IMR-90 (cell line): ENCODE measurements at regions of chr12 and their contacts with region 1.

Region 1: DNA sequence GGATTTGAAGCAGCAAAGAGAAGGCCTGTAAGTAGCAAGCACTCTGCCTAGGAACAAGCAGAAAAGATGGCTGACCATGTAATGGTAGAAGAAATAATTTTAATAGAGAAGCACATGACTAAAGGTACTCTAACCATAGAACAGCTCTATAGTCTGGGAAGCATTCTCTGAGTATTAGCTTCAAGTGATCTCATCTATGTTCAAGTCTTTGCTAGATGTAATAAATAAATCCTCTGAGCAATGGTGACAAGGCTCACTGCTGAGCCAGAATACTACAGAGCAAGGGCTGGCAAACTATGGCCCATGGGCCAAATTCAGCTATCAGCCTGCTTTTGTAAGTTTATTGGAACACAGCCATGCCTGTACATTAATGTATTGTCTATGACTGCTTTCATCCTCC is 84.8 kb downstream of the PEBP1 start:
- DNase-seq: peak; percentile 64
- ATAC-seq: peak; percentile 61
- H3K4me3 ChIP-seq: no peak overlapping the region
- H3K27ac ChIP-seq: no peak overlapping the region
- H3K4me1 ChIP-seq: no peaks in the 10 kb centered on the region; the same call in 1 of the 2 replicates
- H3K27me3 ChIP-seq: no peaks in the 10 kb centered on the region
- CTCF ChIP-seq: no peak
- POLR2A ChIP-seq: no peak
- RAD21 ChIP-seq: no peak

Region 2: DNA sequence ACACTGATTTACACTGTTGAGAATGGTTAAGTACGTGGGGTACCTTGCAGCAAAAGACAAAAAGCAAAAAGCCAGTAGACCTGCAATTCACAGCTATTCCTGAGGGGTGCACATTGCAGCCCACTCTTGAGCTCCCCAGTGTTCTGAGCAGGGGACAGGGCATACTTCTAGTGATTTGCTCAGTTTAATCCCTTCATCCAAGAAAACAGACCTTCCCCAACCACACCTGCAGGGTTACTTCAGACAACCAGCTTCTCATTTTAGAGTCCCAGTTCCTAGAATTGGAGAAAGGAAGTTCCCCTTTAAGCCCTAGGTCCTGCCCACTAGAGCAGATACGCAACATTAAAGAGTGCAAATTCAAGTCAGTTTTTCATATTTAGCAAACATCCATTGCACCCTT is 156.1 kb before region 1 on chr12:
- CTCF ChIA-PET with region 1: no interaction called
- POLR2A ChIA-PET with region 1: no interaction called
- dilution Hi-C with region 1: no loop called
- in situ Hi-C with region 1: no loop called
- intact Hi-C with region 1: no loop called
- DNase-seq: no peak
- ATAC-seq: no peak
- H3K4me3 ChIP-seq: no peak overlapping the region
- H3K27ac ChIP-seq: no peak overlapping the region
- H3K4me1 ChIP-seq: peaks cover 7% of the 10 kb centered on the region
- H3K27me3 ChIP-seq: no peaks in the 10 kb centered on the region
- CTCF ChIP-seq: no peak
- POLR2A ChIP-seq: no peak
- RAD21 ChIP-seq: no peak

Region 3: GRCh38 chr12:118206107-118206412 is 14.6 kb before region 1 on chr12:
- CTCF ChIA-PET with region 1: no interaction called
- POLR2A ChIA-PET with region 1: interaction called, 16 read pairs
- dilution Hi-C with region 1: no loop called
- in situ Hi-C with region 1: no loop called
- intact Hi-C with region 1: no loop called
- DNase-seq: no peak
- ATAC-seq: no peak
- H3K4me3 ChIP-seq: no peak overlapping the region
- H3K27ac ChIP-seq: no peak overlapping the region
- H3K4me1 ChIP-seq: no peaks in the 10 kb centered on the region
- H3K27me3 ChIP-seq: no peaks in the 10 kb centered on the region
- CTCF ChIP-seq: no peak
- POLR2A ChIP-seq: no peak
- RAD21 ChIP-seq: no peak

Region 4: DNA sequence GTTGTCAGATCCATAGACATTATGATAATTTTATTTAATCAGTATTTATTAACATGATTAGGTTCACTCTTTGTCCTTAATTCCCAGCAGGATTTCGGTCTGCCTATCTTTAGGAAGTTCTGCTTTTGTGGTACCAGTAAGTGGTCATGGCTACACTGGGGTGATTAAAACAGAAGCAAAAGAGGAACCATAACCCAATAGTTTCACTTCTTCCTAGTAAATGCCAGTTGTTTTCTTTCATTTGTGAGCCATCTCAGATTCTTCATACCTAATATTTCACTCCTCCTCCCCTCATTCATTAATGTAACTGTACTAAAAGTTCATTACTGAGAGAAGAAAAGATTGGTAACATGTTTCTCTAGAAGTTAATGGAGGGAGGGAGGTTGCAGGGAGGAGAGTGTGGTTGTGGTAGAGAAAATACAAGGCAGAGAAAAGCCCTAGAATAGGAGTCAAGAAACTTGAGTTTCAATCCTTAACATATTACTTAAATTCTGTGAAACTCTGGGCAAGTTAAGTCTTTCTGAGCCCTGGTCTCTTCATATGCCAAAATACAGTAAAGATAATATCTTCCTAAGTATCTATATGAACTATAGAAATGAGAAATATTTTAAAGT is 16.5 kb after region 1 on chr12:
- CTCF ChIA-PET with region 1: interaction called, 6 read pairs
- POLR2A ChIA-PET with region 1: no interaction called
- dilution Hi-C with region 1: no loop called
- in situ Hi-C with region 1: no loop called
- intact Hi-C with region 1: loop called (anchors 2 kb)
- DNase-seq: no peak
- ATAC-seq: no peak
- H3K4me3 ChIP-seq: no peak overlapping the region
- H3K27ac ChIP-seq: no peak overlapping the region
- H3K4me1 ChIP-seq: no peaks in the 10 kb centered on the region
- H3K27me3 ChIP-seq: no peaks in the 10 kb centered on the region
- CTCF ChIP-seq: no peak
- POLR2A ChIP-seq: no peak
- RAD21 ChIP-seq: no peak

Region 5: DNA sequence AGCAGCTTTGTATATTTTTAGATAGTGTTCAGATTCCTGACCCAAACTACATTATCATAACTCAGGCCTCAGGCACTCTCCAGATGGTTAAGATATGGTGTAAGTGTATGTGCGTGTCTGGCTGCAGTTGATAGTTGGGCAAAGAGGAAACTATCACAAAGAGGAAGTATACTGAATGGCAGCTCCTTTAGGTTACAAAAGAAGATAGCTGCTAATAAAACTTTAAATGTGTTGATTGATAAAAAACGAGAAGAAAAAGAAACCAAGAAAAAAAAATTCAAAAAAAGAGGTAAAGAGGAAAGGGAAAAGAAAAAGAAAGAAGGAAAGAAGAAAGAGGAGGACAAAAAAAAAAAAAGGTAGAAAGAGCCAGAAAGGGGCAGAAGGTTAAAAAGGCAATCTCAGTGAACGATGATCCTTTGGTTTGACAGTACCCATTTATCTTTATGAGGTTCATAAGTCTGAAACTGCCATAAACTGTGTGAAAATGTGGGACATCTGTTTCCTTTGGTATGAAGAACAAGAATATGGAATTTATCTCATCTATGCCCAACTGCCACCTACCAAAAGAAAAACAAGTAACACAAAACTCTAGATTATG is 109.8 kb after region 1 on chr12:
- CTCF ChIA-PET with region 1: no interaction called
- POLR2A ChIA-PET with region 1: no interaction called
- dilution Hi-C with region 1: no loop called
- in situ Hi-C with region 1: no loop called
- intact Hi-C with region 1: no loop called
- DNase-seq: peak; percentile 89
- ATAC-seq: peak; percentile 85
- H3K4me3 ChIP-seq: no peak overlapping the region
- H3K27ac ChIP-seq: peak overlapping the region; percentile 59; the same call in 1 of the 2 replicates
- H3K4me1 ChIP-seq: peaks cover 15% of the 10 kb centered on the region
- H3K27me3 ChIP-seq: no peaks in the 10 kb centered on the region
- CTCF ChIP-seq: no peak
- POLR2A ChIP-seq: no peak
- RAD21 ChIP-seq: no peak

Region 6: GRCh38 chr12:118900993-118901392 is 680.3 kb after region 1 on chr12:
- CTCF ChIA-PET with region 1: no interaction called
- POLR2A ChIA-PET with region 1: no interaction called
- dilution Hi-C with region 1: no loop called
- in situ Hi-C with region 1: no loop called
- intact Hi-C with region 1: no loop called
- DNase-seq: no peak
- ATAC-seq: no peak
- H3K4me3 ChIP-seq: no peak overlapping the region
- H3K27ac ChIP-seq: no peak overlapping the region
- H3K4me1 ChIP-seq: no peaks in the 10 kb centered on the region
- H3K27me3 ChIP-seq: no peaks in the 10 kb centered on the region
- CTCF ChIP-seq: no peak
- POLR2A ChIP-seq: no peak
- RAD21 ChIP-seq: no peak